GM13976 (cell line): ENCODE measurements at regions of chr15 and their contacts with region 1.

Region 1: DNA sequence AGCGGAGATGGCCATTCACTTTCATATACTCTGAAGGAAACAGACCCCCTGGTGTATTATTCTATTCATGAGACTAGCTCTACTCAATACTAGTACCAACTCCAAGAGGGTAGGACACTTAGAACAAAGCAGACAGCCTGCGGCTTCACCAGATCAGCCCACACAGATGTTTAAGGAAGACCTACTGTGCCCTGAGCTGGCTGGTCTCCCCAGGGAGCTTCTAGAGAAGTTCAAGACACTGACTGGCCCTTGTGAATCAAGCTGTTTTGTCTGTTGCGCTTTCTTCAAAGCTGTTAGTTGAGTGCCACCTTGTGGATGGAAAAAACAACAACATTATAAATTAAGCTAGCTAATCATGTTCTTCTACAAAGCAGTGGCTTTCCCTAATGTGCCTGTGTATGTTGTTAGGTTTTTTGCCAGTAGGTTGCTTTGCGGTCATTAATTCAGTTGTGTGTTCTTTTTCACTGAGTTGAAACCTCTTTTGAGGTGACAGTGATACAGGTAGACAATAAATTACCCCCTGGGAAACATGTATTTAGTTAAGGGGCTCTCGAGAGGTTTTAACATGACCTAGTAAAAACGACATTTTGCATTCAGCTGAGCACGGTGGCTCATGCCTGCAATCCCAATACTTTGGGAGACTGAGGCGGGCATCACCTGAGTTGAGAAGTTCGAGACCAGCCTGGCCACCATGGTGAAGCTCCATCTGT is 64.2 kb upstream of the MYZAP start:
- DNase-seq: peak; percentile 53
- CTCF ChIP-seq: peak; percentile 23

Region 2: GRCh38 chr15:57146506-57147201 is 380.9 kb before region 1 on chr15:
- in situ Hi-C with region 1: loop called (anchors 10 kb)
- DNase-seq: peak; percentile 28
- CTCF ChIP-seq: peak; percentile 44